Right lobe of liver (tissue), 6 donors: ENCODE measurements at regions of chr9 and their contacts with region 1.

Region 1: GRCh38 chr9:134983074-134983473 is 65.4 kb upstream of the FCN1 start:
- DNase-seq: peak; percentile 56 to 71 (median 66)
- ATAC-seq: peak; percentile 60 to 85 (median 80)
- H3K4me3 ChIP-seq: no peak overlapping the region
- H3K27ac ChIP-seq: no peak overlapping the region
- H3K4me1 ChIP-seq: no peaks in the 10 kb centered on the region
- H3K27me3 ChIP-seq: no peaks in the 10 kb centered on the region
- CTCF ChIP-seq: peak; percentile 31 to 60 (median 49)
- POLR2A ChIP-seq: no peak

Region 2: DNA sequence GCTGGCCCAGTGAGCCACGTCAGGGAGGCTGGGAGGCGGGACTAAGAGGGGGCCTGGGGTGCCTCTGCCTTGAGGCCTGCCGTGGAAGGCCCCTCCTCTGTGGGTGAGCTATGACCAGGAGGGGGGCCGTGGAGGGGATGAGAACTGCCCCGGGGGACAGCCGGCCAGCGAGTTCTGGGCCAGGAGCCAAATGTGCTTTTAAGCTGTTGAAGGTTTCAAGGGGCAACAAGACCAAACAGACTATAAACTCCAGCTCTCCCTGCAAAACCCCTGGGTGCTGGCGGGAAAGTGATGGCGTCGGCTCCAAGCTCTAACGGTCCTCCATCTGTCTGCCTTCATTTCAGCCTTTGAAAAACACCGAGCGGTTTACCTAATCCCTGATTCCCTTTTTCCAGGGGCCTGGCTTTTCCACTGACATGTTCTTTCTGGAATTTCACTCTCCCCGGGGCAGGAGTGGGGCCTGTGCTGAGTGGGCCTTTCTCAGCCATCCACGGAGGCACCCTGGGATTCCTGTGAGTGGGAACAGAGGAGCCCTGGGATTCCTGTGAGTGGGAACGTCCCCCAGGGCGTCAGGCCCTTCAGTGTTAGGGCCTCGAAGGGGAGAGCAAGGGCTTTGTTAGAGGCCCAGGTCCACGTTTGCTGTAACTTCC is 275.9 kb before region 1 on chr9:
- intact Hi-C with region 1: loop called in 1 of 2 experiments (anchors 10 kb)
- DNase-seq: no peak
- ATAC-seq: peak in 3 of 4 donors; percentile 22 to 53 (median 49)
- H3K4me3 ChIP-seq: no peak overlapping the region
- H3K27ac ChIP-seq: peak overlapping the region in 1 of 3 donors; percentile 39
- H3K4me1 ChIP-seq: no peaks in the 10 kb centered on the region
- H3K27me3 ChIP-seq: no peaks in the 10 kb centered on the region
- CTCF ChIP-seq: no peak
- POLR2A ChIP-seq: no peak

Region 3: GRCh38 chr9:134781591-134782294 is 201.3 kb before region 1 on chr9:
- intact Hi-C with region 1: loop called in 1 of 2 experiments (anchors 5 kb)
- DNase-seq: peak in 1 of 3 donors; percentile 42
- ATAC-seq: peak; percentile 34 to 48 (median 44)
- H3K4me3 ChIP-seq: no peak overlapping the region
- H3K27ac ChIP-seq: no peak overlapping the region
- H3K4me1 ChIP-seq: no peaks in the 10 kb centered on the region
- H3K27me3 ChIP-seq: no peaks in the 10 kb centered on the region
- CTCF ChIP-seq: peak in 3 of 4 donors; percentile 20 to 38 (median 26)
- POLR2A ChIP-seq: no peak

Region 4: GRCh38 chr9:134896005-134896833 is 86.9 kb before region 1 on chr9:
- intact Hi-C with region 1: no loop called
- DNase-seq: peak; percentile 56 to 67 (median 59)
- ATAC-seq: peak; percentile 58 to 72 (median 65)
- H3K4me3 ChIP-seq: no peak overlapping the region
- H3K27ac ChIP-seq: peak overlapping the region in 1 of 3 donors; percentile 13
- H3K4me1 ChIP-seq: no peaks in the 10 kb centered on the region
- H3K27me3 ChIP-seq: no peaks in the 10 kb centered on the region
- CTCF ChIP-seq: no peak
- POLR2A ChIP-seq: no peak